ENCODE measurements at regions of chr4 and their contacts with region 1.

Region 1: DNA sequence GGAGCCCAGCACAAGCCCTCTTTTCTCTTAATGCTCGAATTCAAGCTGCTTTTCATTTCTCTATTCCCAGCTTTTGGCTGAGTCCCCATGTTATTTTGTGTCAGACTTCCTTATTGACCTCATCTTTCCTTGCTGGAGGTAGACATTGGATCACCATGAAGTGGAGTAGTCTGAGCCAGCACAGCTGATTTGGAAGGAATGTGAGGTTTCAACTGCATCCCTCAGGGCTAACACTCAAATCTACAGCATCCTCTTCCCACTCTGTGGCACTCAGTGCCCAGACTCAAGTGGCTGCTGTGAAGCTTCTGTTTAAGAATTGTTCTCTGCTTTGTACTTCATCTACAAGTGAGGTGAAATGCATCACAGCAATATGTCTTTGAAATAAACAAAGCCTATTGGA is 6.3 kb downstream of the TRAPPC11 start:
- DNase-seq: no peak
- ATAC-seq: no peak
- H3K4me3 ChIP-seq: no peak overlapping the region
- H3K27ac ChIP-seq: no peak overlapping the region
- H3K4me1 ChIP-seq: peaks cover 4% of the 10 kb centered on the region
- H3K27me3 ChIP-seq: no peaks in the 10 kb centered on the region
- CTCF ChIP-seq: no peak

Region 2: GRCh38 chr4:183522821-183523220 is 142.6 kb before region 1 on chr4:
- intact Hi-C with region 1: no loop called
- DNase-seq: no peak
- ATAC-seq: peak in 2 of 4 donors; percentile 69 to 92
- H3K4me3 ChIP-seq: no peak overlapping the region
- H3K27ac ChIP-seq: no peak overlapping the region
- H3K4me1 ChIP-seq: no peaks in the 10 kb centered on the region
- H3K27me3 ChIP-seq: no peaks in the 10 kb centered on the region
- CTCF ChIP-seq: no peak

Region 3: GRCh38 chr4:183700404-183700803 is 35.0 kb after region 1 on chr4:
- intact Hi-C with region 1: loop called in 1 of 2 experiments (anchors 5 kb)
- DNase-seq: no peak
- ATAC-seq: no peak
- H3K4me3 ChIP-seq: no peak overlapping the region
- H3K27ac ChIP-seq: no peak overlapping the region
- H3K4me1 ChIP-seq: no peaks in the 10 kb centered on the region
- H3K27me3 ChIP-seq: no peaks in the 10 kb centered on the region
- CTCF ChIP-seq: no peak

Region 4: GRCh38 chr4:183788308-183788905 is 123.0 kb after region 1 on chr4:
- intact Hi-C with region 1: no loop called
- DNase-seq: no peak
- ATAC-seq: no peak
- H3K4me3 ChIP-seq: no peak overlapping the region
- H3K27ac ChIP-seq: no peak overlapping the region
- H3K4me1 ChIP-seq: no peaks in the 10 kb centered on the region
- H3K27me3 ChIP-seq: peaks cover 0 to 4% (median 2%) of the 10 kb centered on the region in 3 donors
- CTCF ChIP-seq: no peak

Region 5: DNA sequence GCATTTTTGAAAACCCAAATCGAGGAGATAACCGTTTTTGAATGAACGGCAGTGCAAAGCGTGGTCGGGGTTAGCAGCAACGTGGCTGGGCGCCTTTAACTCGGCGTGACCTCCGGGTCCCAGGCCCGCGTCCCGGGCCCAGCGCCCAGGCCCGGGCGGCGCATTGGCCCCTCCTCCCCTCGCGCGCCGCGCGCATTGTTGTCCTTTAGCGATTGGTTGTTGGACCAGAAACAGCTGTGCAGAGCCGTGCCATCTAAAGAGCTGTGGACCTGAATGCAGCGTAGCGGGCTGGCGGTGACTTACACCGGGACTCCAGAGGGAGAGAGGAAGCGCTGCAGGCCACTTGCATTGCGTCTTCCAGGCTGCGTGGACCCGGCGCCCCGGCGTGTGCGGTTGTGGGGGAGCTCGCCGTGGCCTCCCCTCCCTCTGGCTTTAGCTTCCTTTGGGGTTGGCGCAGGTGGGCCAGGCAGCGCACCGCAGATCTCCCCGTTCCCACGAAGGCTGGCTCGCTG is 239.7 kb after region 1 on chr4 and contains the start of gene STOX2:
- intact Hi-C with region 1: no loop called
- DNase-seq: peak; percentile 78 to 88
- ATAC-seq: peak; percentile 92 to 97 (median 95)
- H3K4me3 ChIP-seq: peak within 1 kb of the TSS; percentile 78
- H3K27ac ChIP-seq: peak within 1 kb of the TSS; percentile 78
- H3K4me1 ChIP-seq: peaks cover 11% of the 10 kb centered on the region
- H3K27me3 ChIP-seq: peaks cover 0 to 14% (median 0%) of the 10 kb centered on the region in 3 donors
- CTCF ChIP-seq: no peak
- total RNA-seq, gene STOX2: 1.7 to 9.3 (median 3.9) TPM